Lower leg skin (tissue), 4 donors: ENCODE measurements at regions of chr13 and their contacts with region 1.

Region 1: GRCh38 chr13:99264051-99264450 is 5.9 kb upstream of the GPR18 start:
- DNase-seq: no peak
- H3K4me3 ChIP-seq: no peak overlapping the region
- CTCF ChIP-seq: no peak
- POLR2A ChIP-seq: no peak

Region 2: DNA sequence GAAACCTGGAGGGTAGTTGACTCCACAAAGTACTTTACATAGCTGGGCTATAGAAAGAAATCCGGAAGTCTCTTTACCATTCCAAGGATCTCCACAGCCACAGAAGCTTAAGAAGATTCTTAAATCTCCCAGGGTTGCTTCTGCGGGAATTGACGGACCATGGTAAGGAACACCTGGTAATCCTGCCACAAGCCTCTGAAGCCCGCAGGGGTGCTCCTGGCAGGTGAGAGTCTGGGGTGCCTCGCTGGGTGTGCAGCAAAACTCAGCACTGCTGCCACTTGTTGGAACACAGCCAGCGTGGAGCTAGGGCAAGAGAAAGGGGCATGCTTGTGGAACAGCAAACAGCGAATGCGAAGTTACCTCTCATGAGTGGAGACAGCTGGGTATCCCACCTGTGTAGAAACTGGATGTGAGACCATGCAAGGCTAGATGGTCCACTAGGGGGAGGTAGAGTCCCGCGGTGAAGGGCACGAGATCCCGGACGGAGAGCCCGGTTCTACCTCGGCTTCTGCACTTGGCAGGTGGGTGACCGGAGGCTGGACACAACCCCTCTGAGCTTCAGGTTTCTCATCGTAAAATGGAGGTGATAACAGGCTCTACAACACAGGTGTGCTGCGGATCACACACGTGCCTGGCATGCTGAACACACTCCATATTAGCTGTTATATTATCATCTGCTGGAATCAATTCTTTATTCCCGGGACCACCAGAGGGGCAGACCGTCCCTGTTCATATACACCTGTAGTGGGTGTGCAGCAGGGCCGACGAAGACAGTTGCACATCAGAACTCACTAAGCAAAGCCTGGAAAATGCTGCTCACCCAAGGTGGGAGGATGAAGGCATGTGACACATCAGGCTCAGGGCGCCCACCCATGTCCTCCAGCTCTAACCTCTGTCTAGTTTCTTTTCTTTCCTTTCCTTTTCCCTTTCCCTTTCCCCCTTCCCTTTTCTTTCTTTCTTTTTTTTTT is 87.5 kb before region 1 on chr13:
- intact Hi-C with region 1: loop called (anchors 5 kb)
- DNase-seq: peak; percentile 65 to 94
- H3K4me3 ChIP-seq: no peak overlapping the region
- CTCF ChIP-seq: peak in 1 of 3 donors; percentile 88
- POLR2A ChIP-seq: no peak